SK-N-SH (cell line): ENCODE measurements at regions of chr14 and their contacts with region 1.

Region 1: GRCh38 chr14:73633116-73634010 is 11.4 kb upstream of the DNAL1 start:
- DNase-seq: peak; percentile 82
- H3K4me3 ChIP-seq: peak overlapping the region in 1 of 2 experiments; percentile 25; a peak in 2 of 4 replicates
- H3K27ac ChIP-seq: no peak overlapping the region
- H3K4me1 ChIP-seq: no peaks in the 10 kb centered on the region
- H3K27me3 ChIP-seq: no peaks in the 10 kb centered on the region
- CTCF ChIP-seq: peak; percentile 93
- EP300 ChIP-seq: no peak
- RAD21 ChIP-seq: peak; percentile 89

Region 2: DNA sequence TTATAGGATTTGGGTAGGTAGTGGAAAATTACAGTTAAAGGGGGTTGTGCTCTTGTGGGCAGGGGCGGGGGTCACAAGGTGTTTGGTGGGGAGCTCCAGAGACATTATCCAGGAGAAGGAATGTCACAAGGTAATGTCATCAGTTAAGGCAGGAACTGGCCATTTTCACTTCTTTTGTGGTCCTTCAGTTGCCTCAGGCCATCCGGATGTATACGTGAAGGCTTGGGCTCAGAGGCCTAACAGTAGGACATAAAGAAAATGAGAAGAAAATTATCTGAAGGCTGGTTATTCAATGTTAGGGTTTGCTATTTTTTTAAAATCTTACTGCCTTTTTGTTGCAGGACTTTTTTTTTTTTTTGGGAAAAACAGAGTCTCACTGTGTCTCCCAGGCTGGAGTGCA is 499.6 kb before region 1 on chr14:
- CTCF ChIA-PET with region 1: no interaction called
- POLR2A ChIA-PET with region 1: no interaction called
- DNase-seq: no peak
- H3K4me3 ChIP-seq: no peak overlapping the region
- H3K27ac ChIP-seq: no peak overlapping the region
- H3K4me1 ChIP-seq: peaks cover 4 to 5% of the 10 kb centered on the region in 2 experiments; a peak in 1 of 4 replicates
- H3K27me3 ChIP-seq: no peaks in the 10 kb centered on the region
- CTCF ChIP-seq: no peak
- EP300 ChIP-seq: no peak
- RAD21 ChIP-seq: no peak

Region 3: GRCh38 chr14:73478684-73479083 is 154.7 kb before region 1 on chr14:
- CTCF ChIA-PET with region 1: no interaction called
- POLR2A ChIA-PET with region 1: no interaction called
- DNase-seq: no peak
- H3K4me3 ChIP-seq: no peak overlapping the region
- H3K27ac ChIP-seq: no peak overlapping the region
- H3K4me1 ChIP-seq: no peaks in the 10 kb centered on the region
- H3K27me3 ChIP-seq: no peaks in the 10 kb centered on the region
- CTCF ChIP-seq: no peak
- EP300 ChIP-seq: no peak
- RAD21 ChIP-seq: no peak

Region 4: DNA sequence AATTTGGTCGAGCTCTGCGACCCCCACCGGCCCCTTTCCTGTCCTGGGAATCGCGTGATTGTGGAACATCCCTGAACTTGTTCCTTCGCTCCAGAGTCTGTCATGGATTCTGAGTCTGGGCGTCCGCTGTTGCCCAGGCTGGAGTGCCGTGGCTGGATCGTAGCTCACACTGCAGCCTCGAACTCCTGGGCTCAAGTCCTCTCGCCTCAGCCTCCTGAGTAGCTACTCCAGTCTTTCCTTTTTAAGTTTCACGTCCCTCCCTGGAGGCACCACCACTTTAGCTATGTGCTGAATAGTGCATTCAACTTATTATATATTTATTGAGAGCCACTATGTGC is 20.3 kb before region 1 on chr14:
- CTCF ChIA-PET with region 1: interaction called, 14 read pairs
- POLR2A ChIA-PET with region 1: no interaction called
- DNase-seq: no peak
- H3K4me3 ChIP-seq: peak overlapping the region; percentile 60 to 62
- H3K27ac ChIP-seq: no peak overlapping the region
- H3K4me1 ChIP-seq: no peaks in the 10 kb centered on the region
- H3K27me3 ChIP-seq: no peaks in the 10 kb centered on the region
- CTCF ChIP-seq: no peak
- EP300 ChIP-seq: no peak
- RAD21 ChIP-seq: no peak

Region 5: GRCh38 chr14:73620268-73620667 is 13.1 kb before region 1 on chr14:
- CTCF ChIA-PET with region 1: interaction called, 14 read pairs
- POLR2A ChIA-PET with region 1: no interaction called
- DNase-seq: no peak
- H3K4me3 ChIP-seq: no peak overlapping the region
- H3K27ac ChIP-seq: no peak overlapping the region
- H3K4me1 ChIP-seq: no peaks in the 10 kb centered on the region
- H3K27me3 ChIP-seq: no peaks in the 10 kb centered on the region
- CTCF ChIP-seq: no peak
- EP300 ChIP-seq: no peak
- RAD21 ChIP-seq: no peak

Region 6: DNA sequence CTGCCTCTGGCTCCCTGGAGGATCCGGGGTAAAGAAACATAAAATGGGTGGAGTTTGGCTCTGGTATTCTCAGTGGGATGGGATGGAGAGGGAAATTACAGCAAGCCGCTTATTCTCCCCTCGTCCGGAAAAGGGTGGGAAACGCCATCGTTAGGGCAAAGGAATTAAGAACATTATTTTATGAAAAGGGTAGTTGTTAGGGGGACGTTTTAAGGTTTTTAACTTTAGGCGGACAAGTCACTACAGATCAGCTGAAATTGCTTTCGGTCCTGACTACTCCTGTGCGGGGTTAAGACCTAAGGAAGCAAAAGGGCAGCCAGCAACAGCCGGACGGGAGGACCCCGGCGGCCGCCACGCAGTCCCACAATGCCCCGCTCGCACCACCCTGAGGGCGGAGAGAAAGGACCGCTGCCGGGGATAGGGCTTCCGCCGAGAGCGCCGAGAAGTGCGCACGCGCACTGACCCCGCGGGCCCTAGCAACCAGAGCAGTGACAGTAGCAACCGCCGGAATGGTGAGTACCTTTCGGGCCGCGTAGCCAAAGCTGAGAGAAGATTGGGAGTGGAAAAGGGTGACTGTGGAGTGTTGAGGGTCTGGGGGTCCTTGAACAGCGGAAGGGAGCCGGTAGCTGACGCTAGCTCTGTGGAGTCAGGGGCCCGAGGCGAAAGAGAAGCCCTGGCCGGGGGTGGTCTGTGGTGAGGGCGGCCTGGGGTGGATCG is 11.3 kb after region 1 on chr14 and contains the start of gene DNAL1:
- CTCF ChIA-PET with region 1: interaction called, 13 read pairs
- POLR2A ChIA-PET with region 1: no interaction called
- DNase-seq: peak; percentile 95
- H3K4me3 ChIP-seq: peak within 1 kb of the TSS; percentile 77 to 99
- H3K27ac ChIP-seq: peak within 1 kb of the TSS; percentile 93 to 95
- H3K4me1 ChIP-seq: peaks cover 0 to 14% of the 10 kb centered on the region in 2 experiments; a peak in 1 of 4 replicates
- H3K27me3 ChIP-seq: no peaks in the 10 kb centered on the region
- CTCF ChIP-seq: no peak
- EP300 ChIP-seq: no peak
- RAD21 ChIP-seq: peak; percentile 6; the same call in 1 of the 2 replicates
- polyA plus RNA-seq, gene DNAL1: 2.6 and 3.6 TPM in 2 replicates

Region 7: GRCh38 chr14:73662487-73662943 is 29.2 kb after region 1 on chr14:
- CTCF ChIA-PET with region 1: interaction called, 12 read pairs
- POLR2A ChIA-PET with region 1: no interaction called
- DNase-seq: peak; percentile 15
- H3K4me3 ChIP-seq: no peak overlapping the region
- H3K27ac ChIP-seq: peak overlapping the region in 1 of 2 experiments; percentile 59; a peak in 2 of 4 replicates
- H3K4me1 ChIP-seq: no peaks in the 10 kb centered on the region
- H3K27me3 ChIP-seq: no peaks in the 10 kb centered on the region
- CTCF ChIP-seq: peak; percentile 73
- EP300 ChIP-seq: 0 out of 4 replicates have a peak, but pooled peaks of 1 of the 2 experiments have one; percentile 16
- RAD21 ChIP-seq: no peak